ENCODE measurements at regions of chr19 and their contacts with region 1.

Region 1: DNA sequence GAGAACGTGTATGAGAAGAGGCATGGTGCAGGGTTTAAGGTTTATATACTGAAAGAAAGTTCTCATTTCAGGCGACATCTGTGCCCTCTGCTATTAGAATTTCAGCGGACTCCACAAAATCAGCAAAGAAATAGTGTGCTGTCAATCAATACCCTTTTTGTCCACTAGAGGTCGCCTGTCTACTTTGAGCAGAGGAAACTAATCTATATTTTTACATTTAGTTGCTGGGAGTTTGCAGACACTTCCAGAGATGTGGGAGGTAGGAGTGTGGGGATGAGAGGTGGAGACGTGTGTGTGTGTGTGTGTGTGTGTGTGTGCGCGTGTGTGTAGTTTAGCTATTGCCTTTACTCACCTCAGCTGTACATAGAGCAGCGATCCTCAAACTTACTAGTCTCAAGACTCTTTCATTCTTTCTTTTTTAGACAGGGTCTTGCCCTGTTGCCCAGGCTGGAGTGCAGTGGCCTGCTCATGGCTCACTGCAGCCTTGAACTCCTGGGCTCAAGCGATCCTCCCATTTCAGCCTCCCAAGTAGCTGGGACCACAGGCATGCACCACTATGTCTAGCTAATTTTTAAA is 9.7 kb downstream of the INAFM1 start:
- DNase-seq: no peak
- ATAC-seq: peak; percentile 46
- H3K4me3 ChIP-seq: no peak overlapping the region
- H3K27ac ChIP-seq: no peak overlapping the region
- H3K4me1 ChIP-seq: peaks cover 15% of the 10 kb centered on the region
- H3K27me3 ChIP-seq: no peaks in the 10 kb centered on the region
- CTCF ChIP-seq: peak; percentile 73 to 85 (median 79)
- EP300 ChIP-seq: no peak
- POLR2A ChIP-seq: no peak
- RAD21 ChIP-seq: peak; percentile 58

Region 2: DNA sequence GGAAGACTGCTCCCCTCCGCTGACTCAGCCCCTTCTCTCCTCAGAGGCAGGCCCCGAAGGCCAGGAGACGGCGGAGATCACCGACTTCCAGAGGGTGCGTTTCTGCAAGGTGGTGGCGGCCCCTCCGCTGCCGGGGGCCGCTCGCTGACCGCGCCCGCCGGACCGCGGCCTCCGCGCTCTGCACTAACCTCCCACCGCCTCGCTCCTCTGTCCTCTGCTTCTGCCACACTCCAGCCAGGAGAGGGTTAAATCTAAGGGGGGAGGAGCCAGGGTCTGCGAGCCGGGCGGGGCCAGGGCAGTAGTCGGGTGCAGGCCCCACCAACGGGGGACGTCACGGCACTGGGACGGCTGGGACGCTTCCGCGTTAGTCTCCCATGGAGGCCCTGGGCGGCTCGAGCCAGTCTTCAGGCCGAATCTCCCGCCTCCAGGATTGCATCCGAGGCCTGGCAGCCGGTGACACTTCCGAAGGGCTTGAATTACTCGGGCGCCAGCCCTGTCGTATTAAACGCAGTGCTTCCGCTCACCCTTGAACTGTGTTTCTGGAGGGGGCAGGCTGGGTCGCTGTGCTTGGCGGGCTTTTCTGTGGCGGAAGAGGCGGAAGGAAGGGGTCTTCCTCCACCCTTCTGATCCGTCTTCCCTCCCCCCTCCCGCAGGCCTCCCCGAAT is 11.0 kb before region 1 on chr19:
- CTCF ChIA-PET with region 1: interaction called, 28 read pairs
- POLR2A ChIA-PET with region 1: interaction called, 6 read pairs
- RAD21 ChIA-PET with region 1: interaction called, 9 read pairs
- SMC1A ChIA-PET with region 1: interaction called, 9 read pairs
- in situ Hi-C with region 1: no loop called
- intact Hi-C with region 1: no loop called
- DNase-seq: no peak
- ATAC-seq: peak; percentile 89
- H3K4me3 ChIP-seq: peak overlapping the region; percentile 86
- H3K27ac ChIP-seq: peak overlapping the region; percentile 99
- H3K4me1 ChIP-seq: peaks cover 10% of the 10 kb centered on the region
- H3K27me3 ChIP-seq: no peaks in the 10 kb centered on the region
- CTCF ChIP-seq: no peak
- EP300 ChIP-seq: 0 out of 4 replicates have a peak, but pooled peaks of 1 of the 2 experiments have one; percentile 11
- POLR2A ChIP-seq: peak; percentile 84
- RAD21 ChIP-seq: no peak

Region 3: DNA sequence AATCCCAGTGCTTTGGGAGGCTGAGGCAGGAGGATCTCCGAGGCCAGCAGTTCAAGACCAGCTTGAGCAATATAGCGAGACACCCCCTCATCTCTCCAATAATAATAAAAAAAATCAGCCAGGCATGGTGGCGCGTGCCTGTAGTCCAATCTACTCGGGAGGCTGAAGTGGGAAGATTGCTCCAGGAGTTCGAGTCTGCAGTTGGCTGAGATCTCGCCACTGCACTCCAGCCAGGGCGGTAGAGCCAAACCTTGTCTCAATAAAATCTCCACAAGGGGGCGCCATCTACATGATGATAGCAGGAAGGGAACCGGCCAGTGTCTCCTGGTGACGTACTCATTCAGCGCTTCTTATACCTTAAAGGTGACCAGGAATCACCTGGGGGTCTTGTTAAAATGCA is 11.6 kb after region 1 on chr19:
- CTCF ChIA-PET with region 1: interaction called, 27 read pairs
- POLR2A ChIA-PET with region 1: interaction called, 4 read pairs
- RAD21 ChIA-PET with region 1: interaction called, 3 read pairs
- SMC1A ChIA-PET with region 1: interaction called, 7 read pairs
- in situ Hi-C with region 1: no loop called
- intact Hi-C with region 1: no loop called
- DNase-seq: no peak
- ATAC-seq: peak; percentile 94
- H3K4me3 ChIP-seq: no peak overlapping the region
- H3K27ac ChIP-seq: no peak overlapping the region
- H3K4me1 ChIP-seq: peaks cover 12% of the 10 kb centered on the region
- H3K27me3 ChIP-seq: no peaks in the 10 kb centered on the region
- CTCF ChIP-seq: peak; percentile 66 to 86 (median 69)
- EP300 ChIP-seq: no peak
- POLR2A ChIP-seq: no peak
- RAD21 ChIP-seq: peak; percentile 89

Measured in GM12878 (cell line).